HepG2 (cell line): ENCODE measurements at regions of chr17 and their contacts with region 1.

Region 1: GRCh38 chr17:81722184-81723120 is 10.4 kb downstream of the SLC25A10 start:
- DNase-seq: no peak
- ATAC-seq: peak; percentile 20
- H3K4me3 ChIP-seq: no peak overlapping the region
- H3K27ac ChIP-seq: peak overlapping the region; percentile 31
- H3K4me1 ChIP-seq: peaks cover 33% of the 10 kb centered on the region
- H3K27me3 ChIP-seq: no peaks in the 10 kb centered on the region
- CTCF ChIP-seq: no peak
- EP300 ChIP-seq: no peak
- POLR2A ChIP-seq: peak; percentile 16 to 81; a peak in 2 of 4 replicates
- RAD21 ChIP-seq: 0 out of 2 replicates have a peak, but pooled peaks have one; percentile 13

Region 2: DNA sequence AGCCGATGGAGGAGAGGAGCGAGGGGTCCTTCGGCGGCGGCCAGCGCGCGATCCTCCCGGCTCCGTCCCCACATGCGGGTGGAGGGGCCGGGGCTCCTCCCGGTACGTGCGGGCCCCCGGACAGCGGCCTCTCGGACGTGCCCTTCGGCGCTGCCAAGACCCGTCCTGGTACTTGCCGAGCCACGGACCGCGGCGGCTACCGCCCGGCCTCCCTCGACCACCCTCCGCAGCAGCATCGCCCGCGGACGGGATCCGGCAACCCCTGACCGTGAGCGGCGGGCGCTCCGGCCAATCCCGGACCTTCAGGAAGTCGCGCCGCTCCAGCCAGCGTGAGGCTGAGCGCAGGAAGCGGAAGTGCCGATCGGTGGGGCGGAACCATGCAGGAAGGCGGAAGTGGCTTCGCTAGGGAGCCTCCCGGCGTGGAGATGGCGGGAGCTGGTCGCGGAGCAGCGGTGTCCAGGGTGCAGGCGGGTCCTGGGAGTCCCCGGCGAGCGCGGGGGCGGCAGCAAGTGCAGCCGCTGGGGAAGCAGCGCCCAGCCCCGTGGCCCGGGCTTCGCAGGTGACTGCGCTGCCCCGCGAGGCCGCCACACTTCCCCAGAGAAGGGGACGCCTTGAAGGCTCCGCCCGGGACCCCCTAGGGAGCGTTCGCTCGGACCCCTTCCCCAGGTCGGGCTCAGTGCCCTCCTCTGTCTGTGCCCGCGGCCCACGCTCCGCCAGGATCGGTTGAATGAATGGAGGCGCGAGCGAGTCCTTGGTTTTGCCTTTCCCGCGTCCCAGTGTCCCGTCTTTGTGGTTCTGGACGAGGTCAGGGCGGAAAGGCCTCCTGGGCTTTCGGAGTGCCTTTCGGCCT is 55.9 kb before region 1 on chr17 and contains the starts of genes CCDC137 and OXLD1:
- CTCF ChIA-PET with region 1: no interaction called
- POLR2A ChIA-PET with region 1: interaction called, 10 read pairs
- in situ Hi-C with region 1: no loop called
- intact Hi-C with region 1: no loop called
- DNase-seq: peak; percentile 94
- ATAC-seq: peak; percentile 97
- H3K4me3 ChIP-seq: peak within 1 kb of the TSS; percentile 86 to 98 (median 96)
- H3K27ac ChIP-seq: peak within 1 kb of the TSS; percentile 81
- H3K4me1 ChIP-seq: peaks cover 27% of the 10 kb centered on the region
- H3K27me3 ChIP-seq: no peaks in the 10 kb centered on the region; a peak in 1 of 5 replicates
- CTCF ChIP-seq: no peak
- EP300 ChIP-seq: no peak; a peak in 1 of 4 replicates
- POLR2A ChIP-seq: peak; percentile 97
- RAD21 ChIP-seq: peak; percentile 56
- total RNA-seq, gene CCDC137: 34.4 and 39.1 TPM in 2 replicates
- total RNA-seq, gene OXLD1: 34.9 and 37.5 TPM in 2 replicates

Region 3: GRCh38 chr17:81683584-81684237 is 38.7 kb before region 1 on chr17 and contains the starts of genes ARL16 and HGS:
- CTCF ChIA-PET with region 1: no interaction called
- POLR2A ChIA-PET with region 1: interaction called, 14 read pairs
- in situ Hi-C with region 1: no loop called
- intact Hi-C with region 1: no loop called
- DNase-seq: peak; percentile 99
- ATAC-seq: peak; percentile 92
- H3K4me3 ChIP-seq: peak within 1 kb of the TSS; percentile 94 to 99 (median 97)
- H3K27ac ChIP-seq: peak within 1 kb of the TSS; percentile 68
- H3K4me1 ChIP-seq: peaks cover 43% of the 10 kb centered on the region
- H3K27me3 ChIP-seq: no peaks in the 10 kb centered on the region; a peak in 1 of 5 replicates
- CTCF ChIP-seq: no peak
- EP300 ChIP-seq: no peak
- POLR2A ChIP-seq: peak; percentile 70 to 76
- RAD21 ChIP-seq: peak; percentile 64
- total RNA-seq, gene ARL16: 18.8 and 20.8 TPM in 2 replicates
- total RNA-seq, gene HGS: 54.1 and 73.3 TPM in 2 replicates

Region 4: DNA sequence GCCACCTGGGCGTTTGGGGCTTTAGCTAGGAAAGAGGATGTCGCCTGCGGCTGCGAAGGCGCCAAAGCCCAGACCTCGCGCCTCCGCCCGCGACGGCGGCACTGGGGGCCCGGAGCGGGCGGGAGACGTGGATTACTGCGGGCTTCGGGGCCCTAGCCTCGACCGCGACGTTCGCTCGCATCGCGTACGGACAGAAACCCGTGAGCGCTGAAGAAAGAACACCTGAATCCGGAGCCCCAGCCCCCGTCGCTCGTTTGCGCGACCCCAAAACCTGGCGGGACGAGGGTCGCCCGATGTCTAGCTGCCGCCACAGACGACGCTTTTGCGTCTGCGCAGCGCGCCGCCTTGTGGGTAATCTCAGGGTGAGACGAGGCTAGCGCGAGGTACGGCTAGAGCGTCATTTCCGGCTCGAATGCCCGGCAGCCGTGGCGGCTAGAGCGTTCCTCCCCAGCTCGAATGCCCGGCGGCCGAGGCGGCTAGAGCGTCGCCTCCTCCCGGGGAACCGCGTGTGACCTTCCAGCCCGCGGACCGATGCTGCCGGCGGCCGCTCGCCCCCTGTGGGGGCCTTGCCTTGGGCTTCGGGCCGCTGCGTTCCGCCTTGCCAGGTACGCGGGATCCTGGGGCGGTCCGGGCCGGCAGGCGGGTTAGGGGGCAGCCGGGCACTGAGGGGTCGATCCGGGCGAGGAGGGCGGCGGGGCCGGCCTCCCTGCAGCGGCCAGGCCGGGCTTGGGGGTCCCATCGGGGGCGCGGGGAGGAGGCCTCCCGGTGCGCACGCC is 19.3 kb before region 1 on chr17 and contains the start of gene MRPL12:
- CTCF ChIA-PET with region 1: no interaction called
- POLR2A ChIA-PET with region 1: interaction called, 33 read pairs
- in situ Hi-C with region 1: no loop called
- intact Hi-C with region 1: no loop called
- DNase-seq: peak; percentile 91
- ATAC-seq: peak; percentile 82
- H3K4me3 ChIP-seq: peak within 1 kb of the TSS; percentile 92 to 93 (median 92)
- H3K27ac ChIP-seq: peak within 1 kb of the TSS; percentile 93
- H3K4me1 ChIP-seq: peaks cover 33% of the 10 kb centered on the region
- H3K27me3 ChIP-seq: no peaks in the 10 kb centered on the region; a peak in 1 of 5 replicates
- CTCF ChIP-seq: peak; percentile 69
- EP300 ChIP-seq: 0 out of 4 replicates have a peak, but pooled peaks of 1 of the 2 experiments have one; percentile 37
- POLR2A ChIP-seq: peak in 1 of 2 experiments; percentile 96; a peak in 2 of 4 replicates
- RAD21 ChIP-seq: peak; percentile 47
- total RNA-seq, gene MRPL12: 39.1 and 72.5 TPM in 2 replicates

Region 5: DNA sequence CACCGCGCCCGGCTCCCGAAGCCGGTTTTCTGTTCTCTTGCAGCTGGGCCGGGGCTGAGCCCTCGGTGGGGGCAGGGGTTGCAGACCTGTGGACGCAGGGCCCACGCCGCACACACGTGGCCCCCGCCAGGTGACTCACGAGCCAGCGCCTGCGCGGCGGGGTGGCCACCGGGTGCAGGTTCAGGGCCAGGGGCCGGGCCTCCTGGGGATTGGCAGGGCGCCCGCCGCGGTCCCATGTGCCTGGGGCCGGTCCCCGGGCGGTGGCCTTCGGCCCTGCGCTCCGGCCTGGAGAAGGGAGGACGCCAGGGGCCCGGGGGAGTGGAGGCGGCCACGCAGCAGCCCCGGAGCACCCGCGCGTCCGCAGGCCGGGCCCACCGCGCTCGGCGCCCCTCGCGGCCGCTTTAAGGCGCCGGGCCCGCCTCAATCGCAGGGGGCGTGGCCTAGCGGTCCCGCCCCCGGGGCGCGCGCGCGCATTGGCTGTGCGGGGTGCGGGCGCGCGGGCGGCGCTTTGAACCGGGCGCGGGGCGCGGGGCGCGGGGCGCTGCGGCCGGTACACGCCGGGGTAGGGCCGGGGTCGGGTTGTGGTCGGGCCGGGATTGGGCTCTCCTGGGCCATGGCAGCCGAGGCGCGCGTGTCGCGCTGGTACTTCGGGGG is 10.5 kb before region 1 on chr17 and contains the start of gene SLC25A10:
- CTCF ChIA-PET with region 1: no interaction called
- POLR2A ChIA-PET with region 1: interaction called, 134 read pairs
- in situ Hi-C with region 1: no loop called
- intact Hi-C with region 1: no loop called
- DNase-seq: peak; percentile 89
- ATAC-seq: peak; percentile 56
- H3K4me3 ChIP-seq: peak within 1 kb of the TSS; percentile 87 to 95 (median 92)
- H3K27ac ChIP-seq: peak within 1 kb of the TSS; percentile 93
- H3K4me1 ChIP-seq: peaks cover 32% of the 10 kb centered on the region
- H3K27me3 ChIP-seq: no peaks in the 10 kb centered on the region; a peak in 1 of 5 replicates
- CTCF ChIP-seq: no peak; the same call in 1 of the 2 replicates
- EP300 ChIP-seq: peak; percentile 41 to 88; a peak in 2 of 4 replicates
- POLR2A ChIP-seq: peak in 1 of 2 experiments; percentile 45; a peak in 1 of 4 replicates
- RAD21 ChIP-seq: peak; percentile 79
- total RNA-seq, gene SLC25A10: 111 and 140 TPM in 2 replicates

Region 6: GRCh38 chr17:81860756-81861518 is 138.5 kb after region 1 on chr17:
- CTCF ChIA-PET with region 1: no interaction called
- POLR2A ChIA-PET with region 1: interaction called, 19 read pairs
- in situ Hi-C with region 1: no loop called
- intact Hi-C with region 1: no loop called
- DNase-seq: peak; percentile 100
- ATAC-seq: peak; percentile 89
- H3K4me3 ChIP-seq: peak overlapping the region; percentile 83 to 91 (median 86)
- H3K27ac ChIP-seq: peak overlapping the region; percentile 94
- H3K4me1 ChIP-seq: peaks cover 77% of the 10 kb centered on the region
- H3K27me3 ChIP-seq: no peaks in the 10 kb centered on the region; a peak in 1 of 5 replicates
- CTCF ChIP-seq: peak; percentile 9; the same call in 1 of the 2 replicates
- EP300 ChIP-seq: peak; percentile 24 to 50; a peak in 3 of 4 replicates
- POLR2A ChIP-seq: peak in 1 of 2 experiments; percentile 94; a peak in 2 of 4 replicates
- RAD21 ChIP-seq: no peak; the same call in 1 of the 2 replicates

Region 7: GRCh38 chr17:81871387-81872230 is 149.2 kb after region 1 on chr17:
- CTCF ChIA-PET with region 1: no interaction called
- POLR2A ChIA-PET with region 1: interaction called, 12 read pairs
- in situ Hi-C with region 1: no loop called
- intact Hi-C with region 1: no loop called
- DNase-seq: peak; percentile 86
- ATAC-seq: no peak; the same call in 2 of the 3 replicates
- H3K4me3 ChIP-seq: peak overlapping the region; percentile 65 to 92 (median 90)
- H3K27ac ChIP-seq: peak overlapping the region; percentile 98
- H3K4me1 ChIP-seq: peaks cover 52% of the 10 kb centered on the region
- H3K27me3 ChIP-seq: no peaks in the 10 kb centered on the region
- CTCF ChIP-seq: peak; percentile 74
- EP300 ChIP-seq: no peak; a peak in 1 of 4 replicates
- POLR2A ChIP-seq: peak in 1 of 2 experiments; percentile 58; a peak in 2 of 4 replicates
- RAD21 ChIP-seq: peak; percentile 81

Region 8: DNA sequence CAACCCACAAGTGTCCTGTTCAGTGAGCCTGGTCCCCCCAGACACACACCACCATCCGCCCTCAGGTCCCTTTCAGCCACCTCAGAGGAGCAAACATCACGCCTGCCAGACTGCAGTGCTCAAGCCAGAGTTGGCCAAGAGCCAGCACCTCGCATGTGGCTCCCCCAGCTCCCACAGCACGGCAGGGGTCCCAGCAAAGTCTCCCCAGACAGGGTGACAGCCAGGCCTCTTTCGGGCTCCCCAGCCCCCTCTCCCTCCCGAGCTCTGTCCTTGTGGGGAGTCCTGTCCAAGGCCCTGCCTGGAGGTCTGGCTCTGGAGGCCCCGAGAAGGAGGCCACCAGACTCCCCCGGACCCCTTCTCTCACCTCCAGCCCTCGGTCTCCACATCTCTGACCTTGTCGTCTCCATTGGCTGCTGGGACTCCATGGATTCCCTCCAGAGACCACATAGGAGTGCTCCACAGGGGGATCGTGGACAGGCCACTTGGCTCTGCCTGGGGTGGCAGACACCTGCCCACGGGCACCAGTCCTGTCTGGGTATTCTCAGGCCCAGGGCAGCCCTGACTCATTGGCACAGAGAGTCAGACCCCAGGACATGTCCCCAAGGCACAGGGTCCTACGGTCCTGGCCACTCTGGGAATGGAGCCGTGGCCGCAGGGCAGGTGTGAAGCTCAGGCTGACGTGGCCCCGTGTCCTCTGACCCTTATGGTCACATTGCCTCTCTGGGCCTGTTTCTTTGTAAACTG is 226.4 kb after region 1 on chr17:
- CTCF ChIA-PET with region 1: no interaction called
- POLR2A ChIA-PET with region 1: no interaction called
- in situ Hi-C with region 1: no loop called
- intact Hi-C with region 1: no loop called
- DNase-seq: no peak
- ATAC-seq: peak; percentile 19
- H3K4me3 ChIP-seq: no peak overlapping the region
- H3K27ac ChIP-seq: no peak overlapping the region
- H3K4me1 ChIP-seq: peaks cover 46% of the 10 kb centered on the region
- H3K27me3 ChIP-seq: no peaks in the 10 kb centered on the region
- CTCF ChIP-seq: no peak
- EP300 ChIP-seq: no peak
- POLR2A ChIP-seq: no peak
- RAD21 ChIP-seq: no peak

Region 9: DNA sequence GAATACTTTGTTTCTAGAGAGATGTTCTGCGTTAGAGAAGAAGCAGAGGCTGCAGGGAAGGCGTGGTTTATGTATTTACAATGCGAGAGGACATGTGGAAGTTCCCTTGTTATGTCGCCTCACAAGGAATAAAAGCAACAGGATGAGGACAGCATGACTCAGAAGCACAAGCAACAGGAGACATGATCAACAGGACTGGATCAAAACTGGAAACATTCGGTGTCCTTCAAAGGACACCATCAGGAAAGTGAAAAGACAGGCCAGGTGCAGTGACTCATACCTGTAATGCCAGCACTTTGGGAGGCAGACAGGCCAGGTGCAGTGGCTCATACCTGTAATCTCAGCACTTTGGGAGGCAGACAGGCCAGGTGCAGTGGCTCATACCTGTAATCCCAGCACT is 437.6 kb after region 1 on chr17:
- CTCF ChIA-PET with region 1: no interaction called
- POLR2A ChIA-PET with region 1: no interaction called
- in situ Hi-C with region 1: no loop called
- intact Hi-C with region 1: no loop called
- DNase-seq: no peak
- ATAC-seq: no peak
- H3K4me3 ChIP-seq: no peak overlapping the region
- H3K27ac ChIP-seq: no peak overlapping the region
- H3K4me1 ChIP-seq: no peaks in the 10 kb centered on the region
- H3K27me3 ChIP-seq: no peaks in the 10 kb centered on the region
- CTCF ChIP-seq: no peak
- EP300 ChIP-seq: no peak
- POLR2A ChIP-seq: no peak
- RAD21 ChIP-seq: no peak